ENCODE measurements at regions of chr11 and their contacts with region 1.

Region 1: GRCh38 chr11:20647976-20648565 is 21.3 kb upstream of the NELL1 start:
- DNase-seq: peak; percentile 51
- ATAC-seq: no peak
- H3K4me3 Mint-ChIP-seq: no peak overlapping the region
- H3K27ac Mint-ChIP-seq: no peak overlapping the region
- H3K4me1 Mint-ChIP-seq: no peaks in the 10 kb centered on the region
- H3K27me3 Mint-ChIP-seq: no peaks in the 10 kb centered on the region

Region 2: GRCh38 chr11:20631519-20632168 is 16.4 kb before region 1 on chr11:
- CTCF ChIA-PET with region 1: interaction called, 10 read pairs
- POLR2A ChIA-PET with region 1: no interaction called
- DNase-seq: no peak
- ATAC-seq: no peak
- H3K4me3 Mint-ChIP-seq: no peak overlapping the region
- H3K27ac Mint-ChIP-seq: no peak overlapping the region
- H3K4me1 Mint-ChIP-seq: no peaks in the 10 kb centered on the region
- H3K27me3 Mint-ChIP-seq: no peaks in the 10 kb centered on the region

Region 3: GRCh38 chr11:20671856-20672546 is 23.9 kb after region 1 on chr11:
- CTCF ChIA-PET with region 1: interaction called, 24 read pairs
- POLR2A ChIA-PET with region 1: no interaction called
- DNase-seq: no peak
- ATAC-seq: no peak
- H3K4me3 Mint-ChIP-seq: no peak overlapping the region
- H3K27ac Mint-ChIP-seq: no peak overlapping the region
- H3K4me1 Mint-ChIP-seq: peaks cover 14% of the 10 kb centered on the region
- H3K27me3 Mint-ChIP-seq: peaks cover 47% of the 10 kb centered on the region

Measured in activated CD8-positive, alpha-beta T cell treated with anti-CD3 and anti-CD28 coated beads, Interleukin-2, amount 10 ng/mL, durations not matched to agents 7 days and 5 days (primary cell).